Activated CD8-positive, alpha-beta T cell treated with anti-CD3 and anti-CD28 coated beads for 36 hours (primary cell): ENCODE measurements at regions of chr10 and their contacts with region 1.

Region 1: DNA sequence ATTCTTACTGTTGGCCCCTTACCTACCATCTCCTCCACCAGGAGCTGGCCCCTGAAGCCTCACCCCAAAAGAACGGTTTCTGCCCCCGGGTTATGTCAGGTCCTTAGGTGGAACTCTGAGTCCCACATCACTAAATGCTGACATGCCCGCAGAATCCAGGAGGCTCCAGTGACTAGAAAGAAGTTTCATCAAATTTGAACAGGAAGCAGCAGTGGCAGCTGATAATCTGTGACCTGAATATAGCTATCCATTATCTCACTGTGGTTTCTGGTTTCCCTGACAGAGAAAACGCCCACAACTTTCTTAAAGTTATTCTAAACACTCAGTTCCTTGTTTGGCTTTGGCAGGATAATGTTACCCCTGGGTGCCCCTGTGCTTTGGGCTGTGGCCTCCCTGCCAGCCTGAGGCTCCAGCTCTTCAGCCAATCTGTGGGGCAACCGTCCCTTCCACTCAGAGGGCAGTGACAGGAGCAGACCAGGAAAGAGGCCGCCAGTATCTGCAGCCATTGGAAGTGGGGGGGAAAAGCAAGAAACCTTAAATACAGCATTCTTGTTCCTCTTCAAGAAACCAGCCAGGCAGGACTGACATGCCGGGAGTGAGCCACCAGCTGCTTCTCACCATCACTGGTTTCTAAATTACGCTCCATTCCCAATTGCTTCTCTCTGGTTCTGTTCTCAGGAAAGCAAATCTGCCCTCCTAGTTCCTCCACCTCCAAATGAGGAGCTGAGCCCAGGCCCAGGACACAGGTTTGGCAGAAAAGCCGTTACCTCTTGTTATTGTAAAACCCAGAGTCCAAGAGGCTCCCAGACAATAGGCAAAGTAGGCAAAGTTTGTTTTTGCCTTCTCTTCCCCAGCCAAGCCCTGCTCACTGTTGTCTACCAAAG is 41.2 kb upstream of the VCL start:
- DNase-seq: peak; percentile 53
- ATAC-seq: peak; percentile 82
- H3K4me3 Mint-ChIP-seq: peak overlapping the region; percentile 38
- H3K27ac Mint-ChIP-seq: peak overlapping the region; percentile 84
- H3K4me1 Mint-ChIP-seq: peaks cover 40% of the 10 kb centered on the region
- H3K27me3 Mint-ChIP-seq: no peaks in the 10 kb centered on the region
- CTCF ChIP-seq: no peak

Region 2: DNA sequence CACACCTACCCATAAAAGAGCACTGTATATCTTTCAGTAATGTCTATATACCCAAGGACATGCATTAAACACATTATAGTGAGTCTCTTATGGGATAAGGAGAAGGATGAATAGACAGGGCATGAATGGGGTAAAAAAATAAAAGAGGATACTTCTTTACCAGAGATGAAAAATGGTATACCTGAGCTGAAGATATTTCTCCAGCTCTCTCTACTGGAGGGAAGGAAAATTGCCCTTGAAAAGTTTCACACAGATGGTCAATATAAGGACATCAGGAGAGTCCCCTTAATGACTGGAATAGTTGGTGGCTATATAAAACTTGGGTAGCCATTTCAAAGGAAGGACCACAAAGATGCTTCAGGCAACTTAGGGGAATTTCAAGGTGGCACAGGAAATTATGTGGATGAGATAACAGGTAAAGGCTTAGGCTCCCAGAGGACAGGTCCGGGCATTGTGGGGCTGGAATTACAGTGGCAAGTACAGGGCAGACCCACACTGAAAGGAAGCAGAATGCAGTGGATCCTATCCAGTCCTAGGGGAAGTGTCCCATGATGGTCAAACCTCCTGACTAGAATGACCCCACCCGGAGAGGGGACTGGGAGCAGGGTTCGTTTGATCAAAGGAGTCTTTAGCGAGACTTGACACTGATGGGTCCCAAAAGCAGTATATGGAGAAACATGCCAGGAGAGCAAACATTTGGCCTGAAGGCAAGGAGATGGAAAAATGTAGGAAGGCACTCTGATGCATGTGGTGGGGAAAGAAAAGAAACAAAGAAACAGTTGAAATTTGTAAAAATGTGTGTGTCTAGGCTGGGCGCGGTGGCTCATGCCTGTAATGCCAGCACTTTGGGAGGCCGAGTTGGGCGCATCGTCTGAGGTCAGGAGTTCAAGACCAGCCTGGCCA is 10.2 kb before region 1 on chr10:
- CTCF ChIA-PET with region 1: interaction called, 77 read pairs
- POLR2A ChIA-PET with region 1: no interaction called
- intact Hi-C with region 1: no loop called
- DNase-seq: no peak
- ATAC-seq: no peak
- H3K4me3 Mint-ChIP-seq: no peak overlapping the region
- H3K27ac Mint-ChIP-seq: no peak overlapping the region
- H3K4me1 Mint-ChIP-seq: no peaks in the 10 kb centered on the region
- H3K27me3 Mint-ChIP-seq: peaks cover 3% of the 10 kb centered on the region
- CTCF ChIP-seq: no peak

Region 3: GRCh38 chr10:73971636-73972354 is 15.1 kb after region 1 on chr10:
- CTCF ChIA-PET with region 1: interaction called, 10 read pairs
- POLR2A ChIA-PET with region 1: interaction called, 4 read pairs
- intact Hi-C with region 1: no loop called
- DNase-seq: no peak
- ATAC-seq: no peak
- H3K4me3 Mint-ChIP-seq: no peak overlapping the region
- H3K27ac Mint-ChIP-seq: no peak overlapping the region
- H3K4me1 Mint-ChIP-seq: peaks cover 16% of the 10 kb centered on the region
- H3K27me3 Mint-ChIP-seq: no peaks in the 10 kb centered on the region
- CTCF ChIP-seq: no peak

Region 4: GRCh38 chr10:73991884-73992245 is 35.1 kb after region 1 on chr10:
- CTCF ChIA-PET with region 1: interaction called, 10 read pairs
- POLR2A ChIA-PET with region 1: no interaction called
- intact Hi-C with region 1: no loop called
- DNase-seq: peak; percentile 88
- ATAC-seq: peak; percentile 99
- H3K4me3 Mint-ChIP-seq: peak overlapping the region; percentile 10
- H3K27ac Mint-ChIP-seq: peak overlapping the region; percentile 67
- H3K4me1 Mint-ChIP-seq: peaks cover 26% of the 10 kb centered on the region
- H3K27me3 Mint-ChIP-seq: no peaks in the 10 kb centered on the region
- CTCF ChIP-seq: no peak